ENCODE measurements at regions of chr9 and their contacts with region 1.

Region 1: DNA sequence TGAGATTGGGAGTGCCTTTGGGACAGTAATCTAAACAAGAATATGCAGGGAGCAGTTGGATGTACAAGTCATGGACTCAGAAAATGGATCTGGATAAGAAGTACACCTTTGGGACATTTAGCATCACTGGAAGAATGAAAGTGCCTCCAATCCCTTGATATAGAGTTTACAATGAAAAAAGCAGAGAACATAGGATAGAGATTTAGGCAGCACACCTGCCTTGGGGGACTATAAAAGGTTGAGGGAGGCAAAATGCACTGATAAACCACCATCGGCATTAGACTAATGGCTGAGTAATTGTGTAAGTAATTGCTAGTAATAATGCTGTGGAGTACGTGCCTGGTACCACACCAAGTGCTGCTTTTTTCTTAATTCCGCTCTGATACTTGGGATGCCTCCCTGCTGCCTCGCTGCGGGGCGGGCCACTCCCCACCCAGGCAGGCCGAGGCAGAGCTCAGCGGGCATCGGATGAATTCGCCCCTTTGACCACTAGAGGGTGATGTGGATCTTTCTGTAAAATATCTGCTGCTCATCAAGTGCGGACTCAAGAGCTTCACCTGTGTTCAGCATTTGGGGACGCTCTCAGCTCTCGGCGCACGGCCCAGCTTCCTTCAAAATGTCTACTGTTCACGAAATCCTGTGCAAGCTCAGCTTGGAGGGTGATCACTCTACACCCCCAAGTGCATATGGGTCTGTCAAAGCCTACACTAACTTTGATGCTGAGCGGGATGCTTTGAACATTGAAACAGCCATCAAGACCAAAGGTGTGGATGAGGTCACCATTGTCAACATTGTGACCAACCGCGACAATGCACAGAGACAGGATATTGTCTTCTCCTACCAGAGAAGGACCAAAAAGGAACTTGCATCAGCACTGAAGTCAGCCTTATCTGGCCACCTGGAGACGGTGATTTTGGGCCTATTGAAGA is 99.9 kb downstream of the ANKRD18B start:
- DNase-seq: peak; percentile 47 to 83 (median 66)
- ATAC-seq: peak; percentile 97
- H3K4me3 ChIP-seq: no peak overlapping the region
- H3K27ac ChIP-seq: no peak overlapping the region
- H3K4me1 ChIP-seq: no peaks in the 10 kb centered on the region
- H3K27me3 ChIP-seq: peaks cover 0 to 16% of the 10 kb centered on the region in 2 donors
- CTCF ChIP-seq: peak; percentile 91

Region 2: GRCh38 chr9:33721674-33722358 is 97.9 kb after region 1 on chr9:
- intact Hi-C with region 1: loop called in 1 of 2 experiments (anchors 2 kb)
- DNase-seq: peak; percentile 80 to 96 (median 84)
- ATAC-seq: peak; percentile 99
- H3K4me3 ChIP-seq: no peak overlapping the region
- H3K27ac ChIP-seq: no peak overlapping the region
- H3K4me1 ChIP-seq: peaks cover 0 to 9% of the 10 kb centered on the region in 2 donors
- H3K27me3 ChIP-seq: no peaks in the 10 kb centered on the region
- CTCF ChIP-seq: peak; percentile 99 to 100